ENCODE measurements at regions of chr12 and their contacts with region 1.

Region 1: GRCh38 chr12:57621497-57622292 is 10.5 kb downstream of the ARHGEF25 start:
- DNase-seq: peak; percentile 48
- H3K4me3 Mint-ChIP-seq: peak overlapping the region; percentile 80
- H3K27ac Mint-ChIP-seq: no peak overlapping the region
- H3K4me1 Mint-ChIP-seq: peaks cover 23% of the 10 kb centered on the region
- H3K27me3 Mint-ChIP-seq: peaks cover 91% of the 10 kb centered on the region

Region 2: DNA sequence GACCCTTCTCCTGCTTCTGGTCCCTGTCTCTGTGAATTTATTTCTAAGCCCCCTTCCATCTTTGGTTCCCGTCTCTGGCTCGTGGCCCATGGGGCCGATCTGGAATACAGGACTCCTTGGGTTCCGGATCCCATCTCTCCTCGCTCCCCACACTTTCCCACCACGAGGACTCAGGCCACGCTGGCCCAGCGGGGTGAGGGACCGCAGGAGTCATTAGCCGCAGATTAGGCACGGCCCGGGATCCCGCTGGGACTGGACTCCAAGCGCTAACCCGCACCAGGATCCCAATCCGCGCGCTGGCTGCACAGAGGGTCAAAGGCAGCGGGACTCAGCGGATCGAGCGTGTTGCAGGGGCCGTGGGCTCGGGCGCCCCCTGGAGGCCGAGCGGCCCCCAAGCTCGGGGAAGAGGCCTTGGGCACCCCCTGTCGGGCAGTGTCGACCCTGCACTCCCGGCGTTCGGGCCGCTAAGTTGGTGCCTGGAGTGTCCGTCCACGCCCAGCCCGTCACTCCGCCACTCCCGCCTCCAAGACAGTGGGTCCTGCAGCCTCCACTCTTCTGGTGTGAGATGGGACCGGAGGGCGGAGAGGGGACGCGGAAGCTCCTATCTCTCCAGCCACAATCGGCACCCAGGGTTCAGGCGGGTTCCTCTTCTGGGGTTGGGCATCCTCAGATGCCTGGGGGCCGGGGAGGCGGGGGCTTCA is 382.7 kb before region 1 on chr12:
- intact Hi-C with region 1: loop called (anchors 10 kb)
- DNase-seq: peak; percentile 86
- H3K4me3 Mint-ChIP-seq: peak overlapping the region; percentile 95
- H3K27ac Mint-ChIP-seq: peak overlapping the region; percentile 78
- H3K4me1 Mint-ChIP-seq: peaks cover 64% of the 10 kb centered on the region
- H3K27me3 Mint-ChIP-seq: peaks cover 48% of the 10 kb centered on the region

Region 3: GRCh38 chr12:57520053-57520871 is 101.4 kb before region 1 on chr12 and contains the start of gene DDIT3:
- intact Hi-C with region 1: no loop called
- DNase-seq: peak; percentile 99
- H3K4me3 Mint-ChIP-seq: peak within 1 kb of the TSS; percentile 97
- H3K27ac Mint-ChIP-seq: peak within 1 kb of the TSS; percentile 100
- H3K4me1 Mint-ChIP-seq: peaks cover 62% of the 10 kb centered on the region
- H3K27me3 Mint-ChIP-seq: no peaks in the 10 kb centered on the region
- total RNA-seq, gene DDIT3: 17.8 and 18.1 TPM in 2 replicates

Region 4: GRCh38 chr12:57568838-57569237 is 52.9 kb before region 1 on chr12:
- intact Hi-C with region 1: no loop called
- DNase-seq: no peak
- H3K4me3 Mint-ChIP-seq: no peak overlapping the region
- H3K27ac Mint-ChIP-seq: no peak overlapping the region
- H3K4me1 Mint-ChIP-seq: no peaks in the 10 kb centered on the region
- H3K27me3 Mint-ChIP-seq: peaks cover 3% of the 10 kb centered on the region

Region 5: GRCh38 chr12:57583008-57583831 is 38.5 kb before region 1 on chr12:
- intact Hi-C with region 1: loop called (anchors 1 kb)
- DNase-seq: peak; percentile 61
- H3K4me3 Mint-ChIP-seq: no peak overlapping the region
- H3K27ac Mint-ChIP-seq: no peak overlapping the region
- H3K4me1 Mint-ChIP-seq: peaks cover 7% of the 10 kb centered on the region
- H3K27me3 Mint-ChIP-seq: peaks cover 3% of the 10 kb centered on the region

Region 6: GRCh38 chr12:57590536-57591479 is 30.9 kb before region 1 on chr12 and contains the start of gene PIP4K2C:
- intact Hi-C with region 1: loop called (anchors 2 kb)
- DNase-seq: peak; percentile 77
- H3K4me3 Mint-ChIP-seq: peak within 1 kb of the TSS; percentile 90
- H3K27ac Mint-ChIP-seq: peak within 1 kb of the TSS; percentile 75
- H3K4me1 Mint-ChIP-seq: peaks cover 31% of the 10 kb centered on the region
- H3K27me3 Mint-ChIP-seq: no peaks in the 10 kb centered on the region
- total RNA-seq, gene PIP4K2C: 22.8 and 25.7 TPM in 2 replicates

Region 7: DNA sequence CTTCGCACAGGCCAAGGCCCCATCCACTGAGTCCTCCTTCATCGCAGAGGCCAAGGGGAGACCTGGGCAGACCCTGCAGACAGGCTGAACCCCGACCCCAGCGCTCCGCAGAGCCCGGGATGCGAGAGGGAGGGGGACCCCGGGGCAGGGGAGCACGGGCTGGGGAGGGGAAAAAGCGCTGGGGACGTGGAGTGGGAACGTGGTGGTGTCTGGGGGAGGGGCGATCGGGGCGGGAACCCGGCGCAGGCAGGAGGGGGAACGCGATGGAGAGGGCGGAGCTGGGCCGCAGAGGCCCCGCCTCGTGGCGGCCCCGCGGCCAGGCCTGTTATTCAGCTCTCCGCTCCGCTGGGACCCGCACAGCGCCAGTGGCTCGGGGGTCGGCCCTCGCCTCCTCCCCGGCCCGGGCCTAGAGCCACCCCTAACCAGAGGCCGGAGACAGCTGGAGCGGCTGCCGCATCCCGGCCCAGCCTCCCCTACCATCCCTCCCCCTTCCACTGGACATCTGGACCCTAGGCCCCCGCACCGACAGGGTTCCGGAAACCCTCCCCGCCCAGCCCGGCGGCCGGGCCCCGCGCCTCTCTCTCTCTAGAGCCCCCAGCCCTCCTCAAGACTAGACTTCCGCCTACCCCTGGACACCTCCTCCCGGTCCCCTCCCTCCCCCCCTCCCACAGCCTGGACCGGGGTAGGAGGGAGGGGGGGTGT is 10.4 kb before region 1 on chr12 and contains the start of gene ARHGEF25:
- intact Hi-C with region 1: loop called (anchors 1 kb)
- DNase-seq: no peak
- H3K4me3 Mint-ChIP-seq: peak within 1 kb of the TSS; percentile 75
- H3K27ac Mint-ChIP-seq: peak within 1 kb of the TSS; percentile 43
- H3K4me1 Mint-ChIP-seq: peaks cover 5% of the 10 kb centered on the region
- H3K27me3 Mint-ChIP-seq: peaks cover 41% of the 10 kb centered on the region
- total RNA-seq, gene ARHGEF25: 0.60 and 1.5 TPM in 2 replicates

Region 8: GRCh38 chr12:57632694-57633477 is 11.2 kb after region 1 on chr12 and contains the start of gene B4GALNT1:
- intact Hi-C with region 1: loop called (anchors 1 kb)
- DNase-seq: peak; percentile 63
- H3K4me3 Mint-ChIP-seq: peak within 1 kb of the TSS; percentile 79
- H3K27ac Mint-ChIP-seq: no peak within 1 kb of the TSS
- H3K4me1 Mint-ChIP-seq: peaks cover 6% of the 10 kb centered on the region
- H3K27me3 Mint-ChIP-seq: peaks cover 54% of the 10 kb centered on the region
- total RNA-seq, gene B4GALNT1: 4.4 and 4.6 TPM in 2 replicates